BJ (cell line): ENCODE measurements at regions of chr10 and their contacts with region 1.

Region 1: DNA sequence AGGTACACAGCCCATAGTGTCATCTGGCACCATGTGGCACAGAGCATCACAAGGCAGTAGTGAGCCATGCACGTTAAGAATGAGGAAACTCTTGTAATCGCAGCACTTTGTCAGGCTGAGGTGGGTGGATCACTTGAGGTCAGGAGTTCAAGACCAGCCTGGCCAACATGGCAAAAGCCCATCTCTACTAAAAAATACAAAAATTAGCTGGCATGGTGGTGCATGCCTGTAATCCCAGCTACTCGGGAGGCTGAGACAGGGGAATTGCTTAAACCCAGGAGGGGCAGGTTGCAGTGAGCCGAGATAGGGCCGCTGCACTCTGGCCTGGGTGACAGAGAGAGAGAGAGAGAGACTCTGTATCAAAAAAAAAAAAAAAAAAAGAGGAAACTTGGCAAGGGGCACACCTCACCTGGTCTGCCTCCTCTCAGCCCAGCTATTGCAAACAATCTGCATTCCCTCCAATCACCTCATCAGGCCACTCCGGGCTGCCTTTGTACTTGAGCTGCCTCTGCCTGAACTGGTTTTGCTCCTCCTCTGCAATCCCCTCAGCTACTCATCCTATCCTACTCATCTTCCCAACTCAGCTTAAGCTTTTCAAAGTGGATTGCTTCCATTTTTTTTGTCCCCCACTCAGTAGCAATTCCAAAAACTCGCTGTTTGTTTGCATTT is 46.0 kb upstream of the OPTN start:
- DNase-seq: no peak
- H3K4me3 ChIP-seq: no peak overlapping the region
- H3K27me3 ChIP-seq: no peaks in the 10 kb centered on the region
- CTCF ChIP-seq: no peak

Region 2: GRCh38 chr10:13231808-13232207 is 177.9 kb after region 1 on chr10:
- CTCF ChIA-PET with region 1: no interaction called
- POLR2A ChIA-PET with region 1: interaction called, 21 read pairs
- DNase-seq: no peak
- H3K4me3 ChIP-seq: no peak overlapping the region
- H3K27me3 ChIP-seq: peaks cover 6% of the 10 kb centered on the region
- CTCF ChIP-seq: no peak